A549 (cell line): ENCODE measurements at regions of chr17 and their contacts with region 1.

Region 1: DNA sequence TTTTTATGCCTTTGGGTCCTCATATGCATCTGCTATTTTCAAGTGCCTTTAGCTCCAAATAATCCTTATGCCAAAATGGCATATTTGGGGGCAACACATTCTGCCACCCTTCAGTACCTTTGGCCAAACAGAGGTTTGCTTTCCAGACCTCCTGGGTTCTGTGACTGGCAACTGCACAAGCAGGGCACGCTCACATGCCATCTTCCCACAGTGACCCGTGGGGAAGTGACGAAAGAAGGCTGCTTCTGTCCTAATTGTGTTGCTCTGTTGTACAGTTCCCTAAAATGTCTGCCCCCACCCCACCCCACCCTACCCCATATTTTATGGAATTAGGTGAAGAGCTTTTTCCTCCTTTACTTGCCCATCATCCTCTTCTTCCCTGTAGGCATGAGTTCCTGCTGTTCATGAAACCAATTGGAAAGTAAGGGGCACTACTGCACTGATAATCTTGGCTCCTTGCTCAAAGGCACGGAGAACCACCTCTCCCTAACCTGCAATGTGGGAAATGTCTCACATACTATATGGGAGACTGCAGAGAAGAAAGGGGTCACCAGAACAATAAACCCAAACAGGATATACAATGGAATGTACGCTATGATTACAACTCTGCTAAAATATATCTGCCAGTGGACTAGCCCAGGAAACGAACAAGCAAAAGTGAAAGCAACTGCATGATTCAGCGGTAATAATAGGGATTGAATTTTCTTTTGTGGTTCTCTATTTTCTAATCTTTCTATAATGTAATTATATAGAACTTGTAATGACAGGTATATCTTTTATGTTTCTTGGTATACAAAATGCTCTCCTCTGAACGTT is 3.3 kb upstream of the SLFN12L start:
- DNase-seq: no peak
- ATAC-seq: peak; percentile 25 to 42; a peak in 3 of 6 replicates
- H3K4me3 ChIP-seq: 0 out of 3 replicates have a peak overlapping the region, but pooled peaks have one; percentile 5
- H3K27ac ChIP-seq: peak overlapping the region; percentile 26 to 56; a peak in 5 of 6 replicates
- H3K4me1 ChIP-seq: no peaks in the 10 kb centered on the region
- CTCF ChIP-seq: no peak
- EP300 ChIP-seq: no peak
- POLR2A ChIP-seq: no peak
- RAD21 ChIP-seq: no peak

Region 2: DNA sequence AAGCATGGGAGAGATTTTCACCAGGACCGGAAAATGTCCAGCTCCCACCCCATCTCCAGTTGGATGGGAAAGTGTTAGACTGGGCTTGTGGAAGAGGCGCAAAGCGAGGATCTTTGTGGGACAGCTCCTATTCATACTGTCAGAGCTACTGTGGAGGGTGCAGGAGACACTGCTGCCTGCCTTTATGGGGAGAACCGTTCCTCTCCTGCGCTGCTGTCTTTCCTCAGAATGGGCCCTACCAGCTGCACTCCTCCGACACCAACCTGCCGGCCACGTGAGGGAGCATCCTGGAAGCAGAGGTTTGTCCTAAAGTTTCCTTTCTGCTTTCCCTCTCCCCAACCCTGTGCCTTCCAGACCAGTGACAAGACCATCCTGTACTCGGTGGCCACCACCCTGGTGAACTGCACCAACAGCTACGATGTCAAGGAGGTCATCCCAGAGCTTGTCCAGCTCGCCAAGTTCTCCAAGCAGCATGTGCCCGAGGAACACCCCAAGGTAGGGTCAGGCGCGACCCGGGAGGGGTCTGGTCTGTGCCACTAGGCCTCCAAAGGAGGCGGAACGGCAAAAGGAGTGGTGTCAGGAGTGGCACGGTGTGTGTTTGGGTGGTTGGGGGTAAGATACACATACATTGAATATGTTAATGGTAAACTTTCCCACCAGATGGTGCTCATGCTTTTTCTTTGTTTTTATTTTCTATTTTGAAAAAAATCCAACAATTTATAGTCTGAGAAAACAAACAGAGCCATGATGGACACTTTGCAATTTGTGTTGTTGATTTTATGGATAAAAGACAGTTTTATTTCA is 369.6 kb before region 1 on chr17:
- CTCF ChIA-PET with region 1: interaction called, 308 read pairs
- POLR2A ChIA-PET with region 1: interaction called, 5 read pairs
- DNase-seq: peak; percentile 37 to 49
- ATAC-seq: peak; percentile 67 to 79; a peak in 5 of 6 replicates
- H3K4me3 ChIP-seq: no peak overlapping the region
- H3K27ac ChIP-seq: no peak overlapping the region
- H3K4me1 ChIP-seq: peaks cover 6% of the 10 kb centered on the region; the same call in 2 of the 3 replicates
- CTCF ChIP-seq: peak; percentile 81
- EP300 ChIP-seq: no peak
- POLR2A ChIP-seq: no peak
- RAD21 ChIP-seq: peak; percentile 75 to 89

Region 3: GRCh38 chr17:35312790-35313711 is 227.7 kb before region 1 on chr17:
- CTCF ChIA-PET with region 1: interaction called, 291 read pairs
- POLR2A ChIA-PET with region 1: no interaction called
- DNase-seq: peak; percentile 69 to 77
- ATAC-seq: peak; percentile 96 to 98
- H3K4me3 ChIP-seq: no peak overlapping the region
- H3K27ac ChIP-seq: no peak overlapping the region
- H3K4me1 ChIP-seq: peaks cover 6% of the 10 kb centered on the region
- CTCF ChIP-seq: peak; percentile 89
- EP300 ChIP-seq: no peak
- POLR2A ChIP-seq: no peak
- RAD21 ChIP-seq: peak; percentile 90 to 94

Region 4: GRCh38 chr17:35521150-35521549 is 19.6 kb before region 1 on chr17:
- CTCF ChIA-PET with region 1: interaction called, 12 read pairs
- POLR2A ChIA-PET with region 1: no interaction called
- DNase-seq: no peak
- ATAC-seq: no peak
- H3K4me3 ChIP-seq: no peak overlapping the region
- H3K27ac ChIP-seq: no peak overlapping the region
- H3K4me1 ChIP-seq: no peaks in the 10 kb centered on the region
- CTCF ChIP-seq: no peak
- EP300 ChIP-seq: no peak
- POLR2A ChIP-seq: no peak
- RAD21 ChIP-seq: no peak

Region 5: DNA sequence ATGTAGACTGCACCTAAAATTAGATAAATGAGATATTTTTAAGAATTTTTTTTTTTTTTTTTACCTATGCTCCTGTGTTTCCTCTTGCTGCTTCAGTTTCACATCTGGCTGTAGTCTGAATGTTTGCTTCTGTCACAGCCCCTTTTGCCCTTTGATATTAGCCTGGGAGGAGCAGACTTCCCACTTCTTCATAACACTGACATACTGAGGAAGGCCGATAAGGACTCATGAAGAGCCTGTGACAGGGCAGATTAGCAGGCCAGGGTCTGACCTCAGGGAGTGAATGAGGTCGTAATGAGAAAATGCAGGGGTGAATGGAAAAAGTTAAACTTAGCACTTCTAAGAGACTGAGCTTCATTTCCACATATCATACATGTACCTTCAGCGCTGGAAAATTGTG is 19.9 kb after region 1 on chr17 and contains the start of gene SLFN14:
- CTCF ChIA-PET with region 1: interaction called, 44 read pairs
- POLR2A ChIA-PET with region 1: no interaction called
- DNase-seq: no peak
- ATAC-seq: no peak
- H3K4me3 ChIP-seq: no peak within 1 kb of the TSS
- H3K27ac ChIP-seq: no peak within 1 kb of the TSS
- H3K4me1 ChIP-seq: no peaks in the 10 kb centered on the region
- CTCF ChIP-seq: no peak
- EP300 ChIP-seq: no peak
- POLR2A ChIP-seq: no peak
- RAD21 ChIP-seq: no peak
- polyA plus RNA-seq, gene SLFN14: not detected in 2 replicates

Region 6: DNA sequence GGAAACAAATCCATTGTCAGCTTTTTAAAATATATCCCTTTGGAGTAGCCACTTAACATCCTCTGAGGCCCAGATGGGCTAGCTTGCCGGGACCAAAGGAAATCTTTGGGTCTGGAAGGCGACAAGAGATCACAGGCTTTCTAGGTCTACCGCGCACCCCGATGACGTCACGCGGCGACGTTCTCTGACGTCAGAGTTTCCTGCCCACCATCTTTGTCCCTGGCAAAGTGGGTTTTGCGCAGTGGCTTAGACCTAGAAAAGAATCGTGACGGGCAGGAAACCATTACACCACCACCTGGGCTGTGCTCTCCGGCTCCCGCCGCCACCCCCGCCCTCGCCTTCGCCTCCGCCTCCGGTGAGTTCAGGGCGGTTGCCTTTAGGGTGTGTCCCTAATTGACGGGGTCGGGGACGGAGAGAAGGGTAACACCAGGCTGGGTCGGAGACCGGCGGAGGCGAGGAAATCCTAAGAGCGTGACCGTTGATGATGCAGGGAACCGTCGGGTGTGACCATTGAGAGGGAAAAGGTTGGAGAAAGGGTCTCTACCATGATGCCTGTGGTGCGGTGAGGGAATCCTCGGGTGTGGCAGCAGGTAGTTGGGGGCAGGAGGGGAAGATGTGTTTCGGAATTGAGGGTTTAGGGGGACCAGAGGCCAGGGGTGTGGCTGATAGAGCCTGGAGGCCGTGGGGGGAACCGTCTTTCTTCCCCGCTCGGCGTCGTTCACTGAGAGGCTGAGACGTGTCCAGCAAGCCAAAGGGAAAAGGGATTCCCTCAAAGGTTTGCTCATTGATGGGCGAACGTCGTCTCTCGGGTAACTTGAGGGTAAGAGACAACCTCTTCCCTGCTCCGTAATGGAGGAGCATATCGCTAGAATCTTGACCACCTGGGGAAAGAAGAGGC is 46.5 kb after region 1 on chr17 and contains the start of gene AP2B1:
- CTCF ChIA-PET with region 1: no interaction called
- POLR2A ChIA-PET with region 1: no interaction called
- DNase-seq: peak; percentile 95 to 99
- ATAC-seq: peak; percentile 88 to 91
- H3K4me3 ChIP-seq: peak within 1 kb of the TSS; percentile 73
- H3K27ac ChIP-seq: peak within 1 kb of the TSS; percentile 91 to 94
- H3K4me1 ChIP-seq: peaks cover 39% of the 10 kb centered on the region
- CTCF ChIP-seq: no peak
- EP300 ChIP-seq: no peak
- POLR2A ChIP-seq: peak; percentile 76
- RAD21 ChIP-seq: no peak
- polyA plus RNA-seq, gene AP2B1: 278 and 309 TPM in 2 replicates